Sigmoid colon (tissue), 7 donors: ENCODE measurements at regions of chr5 and their contacts with region 1.

Region 1: DNA sequence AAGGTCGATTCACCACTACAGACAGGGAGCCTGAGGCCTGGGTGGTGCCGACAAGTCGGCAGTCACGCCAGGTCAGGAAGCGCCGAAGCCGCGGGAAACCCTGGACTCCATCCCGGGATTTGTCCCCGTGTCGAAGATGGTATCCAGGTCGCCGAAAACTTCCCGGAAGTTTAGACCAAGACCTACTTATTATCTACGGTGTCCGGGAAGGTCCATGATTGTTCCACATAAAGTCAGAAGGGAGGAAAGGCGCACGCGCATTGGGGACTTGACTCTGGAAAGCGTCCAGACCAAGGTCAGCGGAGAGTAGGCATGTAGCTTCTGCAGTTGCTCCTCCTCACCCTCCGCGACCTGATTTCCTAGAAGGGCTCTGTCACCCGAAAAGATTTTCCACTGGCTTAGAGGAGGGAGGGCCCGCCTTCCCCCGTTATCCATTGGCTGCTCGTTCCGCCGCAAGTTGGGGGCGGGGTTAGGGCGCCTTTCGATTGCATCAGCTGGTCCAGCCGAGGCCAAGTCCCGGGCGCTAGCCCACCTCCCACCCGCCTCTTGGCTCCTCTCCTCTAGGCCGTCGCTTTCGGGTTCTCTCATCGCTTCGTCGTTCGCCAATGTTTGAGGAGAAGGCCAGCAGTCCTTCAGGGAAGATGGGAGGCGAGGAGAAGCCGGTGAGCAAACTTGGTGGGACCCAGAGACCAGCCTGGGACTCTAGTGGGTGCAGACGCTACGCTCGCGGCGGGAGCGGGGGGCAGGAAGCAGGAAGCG is at the start of gene TARS1:
- DNase-seq: peak; percentile 100
- H3K4me3 ChIP-seq: peak within 1 kb of the TSS; percentile 67 to 83 (median 72)
- H3K27ac ChIP-seq: peak within 1 kb of the TSS; percentile 93 to 96 (median 95)
- H3K4me1 ChIP-seq: peaks cover 0 to 54% (median 49%) of the 10 kb centered on the region in 4 donors
- H3K27me3 ChIP-seq: no peaks in the 10 kb centered on the region
- CTCF ChIP-seq: no peak
- EP300 ChIP-seq: peak in 2 of 4 donors; percentile 68 to 74
- POLR2A ChIP-seq: peak; percentile 83 to 90
- total RNA-seq, gene TARS1: 110 to 128 (median 115) TPM

Region 2: GRCh38 chr5:33102551-33102950 is 338.1 kb before region 1 on chr5:
- intact Hi-C with region 1: no loop called
- DNase-seq: no peak
- H3K4me3 ChIP-seq: no peak overlapping the region
- H3K27ac ChIP-seq: no peak overlapping the region
- H3K4me1 ChIP-seq: no peaks in the 10 kb centered on the region
- H3K27me3 ChIP-seq: no peaks in the 10 kb centered on the region
- CTCF ChIP-seq: no peak
- EP300 ChIP-seq: no peak
- POLR2A ChIP-seq: no peak

Region 3: DNA sequence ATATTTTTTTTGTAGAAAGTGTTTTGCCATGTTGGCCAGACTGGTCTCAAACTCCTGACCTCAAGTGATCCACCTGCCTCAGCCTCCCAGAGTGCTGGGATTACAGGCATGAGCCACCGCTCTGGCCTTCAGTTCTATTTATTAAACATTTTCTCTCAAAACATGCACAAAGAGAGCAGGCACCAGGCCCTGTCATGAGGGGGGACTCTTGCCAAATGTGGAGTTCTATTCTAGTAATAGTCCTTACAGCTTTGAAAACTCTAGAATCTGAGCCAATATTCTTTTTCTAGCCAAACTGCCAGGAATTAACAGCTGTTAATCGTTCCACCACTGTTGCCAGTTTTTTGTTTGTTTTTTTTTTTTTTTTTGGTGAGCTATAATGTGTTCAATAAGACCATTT is 124.7 kb after region 1 on chr5:
- intact Hi-C with region 1: no loop called
- DNase-seq: peak; percentile 80
- H3K4me3 ChIP-seq: no peak overlapping the region
- H3K27ac ChIP-seq: peak overlapping the region in 2 of 4 donors; percentile 18 to 46
- H3K4me1 ChIP-seq: peaks cover 0 to 15% (median 8%) of the 10 kb centered on the region in 4 donors
- H3K27me3 ChIP-seq: no peaks in the 10 kb centered on the region
- CTCF ChIP-seq: no peak
- EP300 ChIP-seq: no peak
- POLR2A ChIP-seq: no peak

Region 4: GRCh38 chr5:33736510-33736909 is 295.8 kb after region 1 on chr5:
- intact Hi-C with region 1: no loop called
- DNase-seq: no peak
- H3K4me3 ChIP-seq: no peak overlapping the region
- H3K27ac ChIP-seq: no peak overlapping the region
- H3K4me1 ChIP-seq: peaks cover 0 to 14% (median 0%) of the 10 kb centered on the region in 4 donors
- H3K27me3 ChIP-seq: no peaks in the 10 kb centered on the region
- CTCF ChIP-seq: no peak
- EP300 ChIP-seq: no peak
- POLR2A ChIP-seq: no peak

Region 5: DNA sequence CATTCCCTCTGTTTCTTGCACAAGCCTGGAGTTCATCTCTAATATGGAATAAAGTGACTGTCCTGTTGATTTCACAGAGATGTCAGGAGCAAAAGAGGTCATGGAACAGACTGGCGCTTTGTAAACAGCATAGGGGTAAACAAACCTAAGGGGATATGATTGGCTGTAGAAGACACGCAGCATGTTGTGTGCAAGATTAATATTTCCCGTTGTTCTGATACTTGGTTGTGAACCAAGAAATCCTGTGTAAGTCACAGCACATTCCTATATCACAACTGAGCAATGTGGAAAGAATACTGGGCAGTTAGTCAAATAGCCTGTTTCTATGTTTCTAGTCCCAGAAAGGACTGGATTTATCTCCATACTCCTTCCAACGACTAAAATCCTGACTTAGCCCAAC is 447.9 kb after region 1 on chr5:
- intact Hi-C with region 1: loop called (anchors 5 kb)
- DNase-seq: no peak
- H3K4me3 ChIP-seq: no peak overlapping the region
- H3K27ac ChIP-seq: no peak overlapping the region
- H3K4me1 ChIP-seq: peaks cover 0 to 58% (median 48%) of the 10 kb centered on the region in 4 donors
- H3K27me3 ChIP-seq: no peaks in the 10 kb centered on the region
- CTCF ChIP-seq: no peak
- EP300 ChIP-seq: no peak
- POLR2A ChIP-seq: no peak

Region 6: DNA sequence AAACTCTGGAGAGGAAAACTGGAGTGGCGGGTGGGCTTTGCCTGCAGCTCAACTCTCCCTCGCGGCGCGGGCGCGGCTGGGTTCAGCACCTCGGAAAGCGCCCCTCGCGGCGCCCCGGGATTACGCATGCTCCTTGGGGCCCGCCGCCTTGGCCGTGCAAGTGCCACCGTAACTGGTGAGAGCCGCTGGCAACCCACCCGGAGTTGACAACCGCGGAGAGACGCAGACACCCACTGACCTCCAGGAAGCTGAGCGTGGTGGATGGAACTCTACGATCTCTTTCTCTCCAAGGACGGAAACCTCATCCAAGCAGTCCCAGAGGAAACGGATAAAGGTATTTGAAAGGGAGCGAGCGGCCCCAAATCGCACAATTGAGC is 495.3 kb after region 1 on chr5:
- intact Hi-C with region 1: loop called (anchors 5 kb)
- DNase-seq: no peak
- H3K4me3 ChIP-seq: peak overlapping the region in 3 of 4 donors; percentile 7 to 39 (median 29)
- H3K27ac ChIP-seq: no peak overlapping the region
- H3K4me1 ChIP-seq: peaks cover 0 to 19% (median 13%) of the 10 kb centered on the region in 4 donors
- H3K27me3 ChIP-seq: peaks cover 21 to 57% (median 39%) of the 10 kb centered on the region in 3 donors
- CTCF ChIP-seq: peak in 2 of 4 experiments; percentile 21 to 45
- EP300 ChIP-seq: no peak
- POLR2A ChIP-seq: no peak

Region 7: GRCh38 chr5:34915139-34915855 is 1474.6 kb after region 1 on chr5 and contains the starts of genes BRIX1 and RAD1:
- intact Hi-C with region 1: loop called (anchors 10 kb)
- DNase-seq: peak; percentile 97
- H3K4me3 ChIP-seq: peak within 1 kb of the TSS; percentile 72 to 99 (median 85)
- H3K27ac ChIP-seq: peak within 1 kb of the TSS; percentile 87 to 93 (median 90)
- H3K4me1 ChIP-seq: peaks cover 0 to 43% (median 36%) of the 10 kb centered on the region in 4 donors
- H3K27me3 ChIP-seq: no peaks in the 10 kb centered on the region
- CTCF ChIP-seq: no peak
- EP300 ChIP-seq: no peak
- POLR2A ChIP-seq: peak; percentile 76 to 79
- total RNA-seq, gene BRIX1: 8.6 to 26.0 (median 20.3) TPM
- total RNA-seq, gene RAD1: 15.8 to 25.8 (median 20.0) TPM